Dorsolateral prefrontal cortex (tissue), 120 donors: ENCODE measurements at regions of chr15 and their contacts with region 1.

Region 1: GRCh38 chr15:90489514-90489913 is 40.2 kb upstream of the CRTC3 start:
- DNase-seq: no peak
- H3K4me3 ChIP-seq: no peak overlapping the region
- H3K27ac ChIP-seq: peak overlapping the region in 5 of 59 donors; percentile 19 to 65 (median 48)
- H3K27me3 ChIP-seq: no peaks in the 10 kb centered on the region
- CTCF ChIP-seq: no peak

Region 2: DNA sequence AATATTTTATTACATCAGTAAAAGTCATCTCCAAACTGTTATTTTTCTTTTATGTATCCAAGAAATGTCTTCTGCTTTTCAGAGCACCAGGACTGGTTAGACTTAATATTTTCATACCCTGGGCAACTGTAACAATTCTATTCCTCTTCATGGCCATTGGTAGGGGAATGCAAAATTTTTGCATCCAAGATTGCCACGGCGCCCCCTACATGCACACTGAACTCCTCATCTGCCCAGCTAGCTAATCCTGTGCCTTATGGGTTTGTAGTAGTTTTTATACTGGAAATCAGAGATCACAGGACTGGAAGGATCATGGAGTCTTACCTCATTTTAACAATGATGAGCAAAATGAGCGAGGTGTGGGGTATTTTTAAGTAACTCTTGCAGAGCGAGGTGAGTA is 114.4 kb after region 1 on chr15:
- intact Hi-C with region 1: loop called (anchors 5 kb)
- DNase-seq: no peak
- H3K4me3 ChIP-seq: no peak overlapping the region
- H3K27ac ChIP-seq: peak overlapping the region in 4 of 59 donors; percentile 4 to 36 (median 16)
- H3K27me3 ChIP-seq: no peaks in the 10 kb centered on the region
- CTCF ChIP-seq: peak in 43 of 56 donors; percentile 11 to 53 (median 29)